Transverse colon (tissue), 4 donors: ENCODE measurements at regions of chr2 and their contacts with region 1.

Region 1: GRCh38 chr2:47386551-47386950 is 16.4 kb upstream of the MSH2 start:
- DNase-seq: no peak
- H3K4me3 ChIP-seq: no peak overlapping the region
- H3K27ac ChIP-seq: no peak overlapping the region
- H3K4me1 ChIP-seq: peaks cover 0 to 15% (median 3%) of the 10 kb centered on the region in 4 donors
- H3K27me3 ChIP-seq: no peaks in the 10 kb centered on the region
- CTCF ChIP-seq: no peak
- EP300 ChIP-seq: no peak
- POLR2A ChIP-seq: no peak

Region 2: GRCh38 chr2:47334356-47335136 is 52.0 kb before region 1 on chr2:
- in situ Hi-C with region 1: loop called (anchors 5 to 10 kb)
- intact Hi-C with region 1: loop called (anchors 5 kb)
- DNase-seq: no peak
- H3K4me3 ChIP-seq: no peak overlapping the region
- H3K27ac ChIP-seq: no peak overlapping the region
- H3K4me1 ChIP-seq: peaks cover 5 to 28% (median 16%) of the 10 kb centered on the region in 4 donors
- H3K27me3 ChIP-seq: no peaks in the 10 kb centered on the region
- CTCF ChIP-seq: no peak
- EP300 ChIP-seq: no peak
- POLR2A ChIP-seq: no peak

Region 3: DNA sequence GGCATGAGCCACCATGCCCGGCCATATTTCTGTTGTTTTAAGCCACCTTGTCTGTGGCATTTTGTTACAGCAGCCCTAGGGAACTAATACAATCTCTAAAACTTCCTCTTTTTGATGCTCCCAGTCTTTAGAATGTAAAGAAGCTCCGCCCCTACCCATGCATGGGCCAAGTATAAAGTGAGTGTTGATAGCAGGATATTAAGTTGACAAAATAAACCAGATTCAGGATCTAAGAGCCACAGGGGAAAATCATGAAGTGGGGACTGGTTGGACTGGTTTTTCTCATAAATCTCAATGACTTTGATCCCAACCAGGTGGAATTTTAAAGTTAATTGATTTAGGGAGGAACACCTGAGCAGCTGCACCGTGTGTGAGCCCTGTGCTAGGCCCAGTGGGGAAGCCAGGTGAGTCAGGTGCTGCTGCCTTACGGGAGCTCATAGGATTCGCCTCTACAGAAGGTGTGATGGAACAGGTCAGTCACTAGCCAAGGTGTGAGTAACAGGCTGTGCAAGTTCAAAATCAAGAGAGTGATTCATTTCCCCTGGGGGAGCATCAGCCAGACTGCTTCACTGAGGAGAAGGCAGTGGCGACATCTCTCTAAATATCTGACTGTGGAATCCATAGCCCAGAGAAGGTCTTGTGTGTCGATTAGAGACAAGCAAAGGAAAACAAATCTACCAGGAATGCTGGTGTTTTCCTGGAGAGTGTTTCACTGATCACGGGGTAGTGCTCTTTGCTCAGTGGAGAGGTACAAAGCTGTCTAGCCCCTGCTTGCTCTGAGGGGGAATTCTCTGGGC is 46.6 kb before region 1 on chr2:
- in situ Hi-C with region 1: loop called in 3 of 4 experiments (anchors 5 to 10 kb)
- intact Hi-C with region 1: loop called (anchors 5 kb)
- DNase-seq: peak; percentile 63
- H3K4me3 ChIP-seq: no peak overlapping the region
- H3K27ac ChIP-seq: peak overlapping the region; percentile 53 to 85 (median 70)
- H3K4me1 ChIP-seq: peaks cover 5 to 70% (median 33%) of the 10 kb centered on the region in 4 donors
- H3K27me3 ChIP-seq: no peaks in the 10 kb centered on the region
- CTCF ChIP-seq: no peak
- EP300 ChIP-seq: no peak
- POLR2A ChIP-seq: no peak